Kidney (tissue), 22 donors: ENCODE measurements at regions of chr2 and their contacts with region 1.

Region 1: GRCh38 chr2:113370478-113371091 is 66.9 kb upstream of the ZNG1B start:
- DNase-seq: peak in 4 of 5 donors; percentile 84 to 92 (median 88)
- H3K4me3 ChIP-seq: no peak overlapping the region
- H3K27ac ChIP-seq: no peak overlapping the region
- H3K4me1 ChIP-seq: no peaks in the 10 kb centered on the region
- H3K27me3 ChIP-seq: no peaks in the 10 kb centered on the region
- CTCF ChIP-seq: peak; percentile 71

Region 2: DNA sequence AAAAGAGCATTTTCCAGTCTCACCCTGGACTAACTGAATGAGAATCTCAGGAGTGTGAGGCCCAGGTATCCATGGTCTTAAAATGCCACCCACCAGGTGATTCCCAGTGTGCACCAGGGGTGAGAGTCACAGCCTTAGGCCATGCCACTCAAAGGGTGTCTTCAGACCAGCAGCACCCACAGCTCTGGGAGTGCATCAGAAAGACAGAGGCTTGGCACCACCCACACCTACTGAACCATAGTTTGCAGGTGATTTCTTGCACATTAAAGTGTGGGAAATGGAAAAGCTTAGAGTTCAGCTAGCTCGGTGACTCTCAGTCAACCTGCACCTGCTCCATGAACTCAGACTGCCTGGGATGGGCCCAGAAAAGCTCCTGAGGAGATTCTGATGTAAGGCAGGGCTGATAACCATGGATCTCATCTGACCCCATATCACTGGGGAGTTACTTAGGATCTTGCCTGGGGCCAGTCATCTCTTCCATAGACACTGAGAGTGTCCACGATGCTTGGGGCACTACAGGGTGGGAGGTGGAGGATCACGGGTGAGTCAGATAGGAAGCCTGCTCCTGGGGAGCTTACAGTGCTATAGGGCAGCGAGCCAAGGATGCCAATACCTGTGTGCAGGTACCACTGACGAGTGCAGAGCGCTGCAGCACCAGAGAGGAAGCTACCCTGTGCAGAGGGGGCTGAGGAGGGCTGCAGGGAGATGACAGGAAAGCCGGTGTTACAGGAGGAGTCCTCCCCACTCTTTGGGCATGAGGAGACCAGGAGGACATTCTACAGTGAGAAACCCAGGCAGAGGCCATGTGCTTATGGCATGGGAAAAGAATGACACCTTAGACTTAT is 455.1 kb before region 1 on chr2:
- intact Hi-C with region 1: no loop called
- DNase-seq: no peak
- H3K4me3 ChIP-seq: no peak overlapping the region
- H3K27ac ChIP-seq: no peak overlapping the region
- H3K4me1 ChIP-seq: no peaks in the 10 kb centered on the region
- H3K27me3 ChIP-seq: no peaks in the 10 kb centered on the region
- CTCF ChIP-seq: no peak

Region 3: DNA sequence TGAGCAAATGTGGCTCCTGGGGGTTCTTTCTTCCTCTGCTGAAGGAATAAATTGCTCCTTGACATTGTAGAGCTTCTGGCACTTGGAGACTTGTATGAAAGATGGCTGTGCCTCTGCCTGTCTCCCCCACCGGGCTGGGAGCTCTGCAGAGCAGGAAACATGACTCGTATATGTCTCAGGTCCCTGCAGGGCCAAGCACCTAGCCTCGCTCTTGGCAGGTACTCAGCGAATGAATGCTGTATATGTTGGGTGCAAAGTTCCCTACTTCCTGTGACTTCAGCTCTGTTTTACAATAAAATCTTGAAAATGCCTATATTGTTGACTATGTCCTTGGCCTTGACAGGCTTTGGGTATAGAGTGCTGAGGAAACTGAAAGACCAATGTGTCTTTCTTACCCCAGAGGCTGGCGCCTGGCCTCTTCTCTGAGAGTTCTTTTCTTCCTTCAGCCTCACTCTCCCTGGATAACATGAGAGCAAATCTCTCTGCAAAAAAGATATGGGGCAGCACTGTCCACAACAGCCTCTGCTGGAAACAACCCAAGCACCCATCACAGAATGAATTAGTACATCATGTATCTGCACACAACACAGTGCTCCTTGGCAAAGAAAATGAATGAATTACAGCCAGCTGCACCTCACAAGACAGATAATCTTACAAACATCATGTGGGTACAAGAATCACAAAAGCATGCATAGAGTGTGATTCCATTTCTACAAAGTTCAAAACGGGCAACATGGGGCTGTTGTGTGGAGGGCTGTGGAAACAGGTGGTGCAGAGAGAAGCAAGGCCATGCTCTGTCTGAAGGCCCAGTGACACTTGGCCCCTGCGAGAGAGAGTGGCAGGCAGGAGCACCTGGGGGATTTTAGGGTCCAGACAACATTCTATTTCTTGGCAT is 236.6 kb before region 1 on chr2:
- intact Hi-C with region 1: loop called (anchors 5 kb)
- DNase-seq: no peak
- H3K4me3 ChIP-seq: no peak overlapping the region
- H3K27ac ChIP-seq: no peak overlapping the region
- H3K4me1 ChIP-seq: no peaks in the 10 kb centered on the region
- H3K27me3 ChIP-seq: no peaks in the 10 kb centered on the region
- CTCF ChIP-seq: no peak

Region 4: GRCh38 chr2:113248997-113249770 is 121.4 kb before region 1 on chr2:
- intact Hi-C with region 1: loop called (anchors 5 kb)
- DNase-seq: peak; percentile 77 to 88 (median 84)
- H3K4me3 ChIP-seq: no peak overlapping the region
- H3K27ac ChIP-seq: peak overlapping the region; percentile 61 to 68
- H3K4me1 ChIP-seq: peaks cover 0 to 41% (median 34%) of the 10 kb centered on the region in 3 donors
- H3K27me3 ChIP-seq: no peaks in the 10 kb centered on the region
- CTCF ChIP-seq: peak; percentile 87